ENCODE measurements at regions of chr5 and their contacts with region 1.

Region 1: GRCh38 chr5:129767906-129768380 is 20.0 kb downstream of the MINAR2 start:
- DNase-seq: peak; percentile 84
- H3K4me3 ChIP-seq: no peak overlapping the region
- H3K27ac ChIP-seq: no peak overlapping the region
- H3K4me1 ChIP-seq: no peaks in the 10 kb centered on the region
- H3K27me3 ChIP-seq: no peaks in the 10 kb centered on the region
- CTCF ChIP-seq: peak; percentile 96 to 99

Region 2: GRCh38 chr5:128213340-128213739 is 1554.6 kb before region 1 on chr5:
- CTCF ChIA-PET with region 1: no interaction called
- dilution Hi-C with region 1: no loop called
- in situ Hi-C with region 1: no loop called
- intact Hi-C with region 1: loop called (anchors 5 kb)
- DNase-seq: peak; percentile 46
- H3K4me3 ChIP-seq: no peak overlapping the region
- H3K27ac ChIP-seq: no peak overlapping the region
- H3K4me1 ChIP-seq: peaks cover 8% of the 10 kb centered on the region
- H3K27me3 ChIP-seq: no peaks in the 10 kb centered on the region
- CTCF ChIP-seq: peak; percentile 74 to 78

Region 3: DNA sequence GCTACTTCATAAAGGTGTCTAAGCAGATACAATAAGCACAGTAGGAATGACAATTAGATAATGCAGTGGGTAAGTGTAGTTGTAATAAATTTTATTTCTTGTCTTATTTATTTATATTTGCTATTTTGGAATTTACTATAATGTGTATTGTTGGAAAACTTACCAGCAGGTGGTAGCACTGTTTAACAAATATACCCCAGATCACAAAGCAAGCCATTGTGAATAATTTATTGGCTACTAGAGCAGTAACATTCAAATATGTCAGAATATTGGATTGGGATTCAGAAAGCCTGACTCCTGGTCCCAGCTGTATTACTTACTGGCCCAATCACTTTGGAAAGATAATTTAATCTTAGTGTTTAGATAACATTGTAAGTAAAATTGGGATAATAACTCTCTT is 595.4 kb before region 1 on chr5:
- CTCF ChIA-PET with region 1: no interaction called
- dilution Hi-C with region 1: no loop called
- in situ Hi-C with region 1: loop called in 1 of 2 experiments (anchors 25 kb)
- intact Hi-C with region 1: loop called (anchors 1 kb)
- DNase-seq: no peak
- H3K4me3 ChIP-seq: no peak overlapping the region
- H3K27ac ChIP-seq: no peak overlapping the region
- H3K4me1 ChIP-seq: no peaks in the 10 kb centered on the region
- H3K27me3 ChIP-seq: no peaks in the 10 kb centered on the region
- CTCF ChIP-seq: peak in 1 of 2 donors; percentile 21

Region 4: GRCh38 chr5:129400322-129400983 is 367.5 kb before region 1 on chr5:
- CTCF ChIA-PET with region 1: no interaction called
- dilution Hi-C with region 1: no loop called
- in situ Hi-C with region 1: no loop called
- intact Hi-C with region 1: loop called (anchors 1 kb)
- DNase-seq: no peak
- H3K4me3 ChIP-seq: no peak overlapping the region
- H3K27ac ChIP-seq: no peak overlapping the region
- H3K4me1 ChIP-seq: no peaks in the 10 kb centered on the region
- H3K27me3 ChIP-seq: peaks cover 1% of the 10 kb centered on the region
- CTCF ChIP-seq: peak; percentile 10 to 27

Region 5: GRCh38 chr5:129664337-129664937 is 103.5 kb before region 1 on chr5:
- CTCF ChIA-PET with region 1: interaction called, 3 read pairs
- dilution Hi-C with region 1: no loop called
- in situ Hi-C with region 1: no loop called
- intact Hi-C with region 1: loop called (anchors 1 kb)
- DNase-seq: peak; percentile 20
- H3K4me3 ChIP-seq: no peak overlapping the region
- H3K27ac ChIP-seq: no peak overlapping the region
- H3K4me1 ChIP-seq: no peaks in the 10 kb centered on the region
- H3K27me3 ChIP-seq: no peaks in the 10 kb centered on the region
- CTCF ChIP-seq: peak; percentile 85 to 97

Region 6: GRCh38 chr5:129836321-129836720 is 68.4 kb after region 1 on chr5:
- CTCF ChIA-PET with region 1: no interaction called
- dilution Hi-C with region 1: no loop called
- in situ Hi-C with region 1: no loop called
- intact Hi-C with region 1: no loop called
- DNase-seq: no peak
- H3K4me3 ChIP-seq: no peak overlapping the region
- H3K27ac ChIP-seq: no peak overlapping the region
- H3K4me1 ChIP-seq: no peaks in the 10 kb centered on the region
- H3K27me3 ChIP-seq: no peaks in the 10 kb centered on the region
- CTCF ChIP-seq: no peak

Region 7: GRCh38 chr5:130912088-130912487 is 1144.1 kb after region 1 on chr5:
- CTCF ChIA-PET with region 1: no interaction called
- dilution Hi-C with region 1: no loop called
- in situ Hi-C with region 1: no loop called
- intact Hi-C with region 1: loop called (anchors 5 kb)
- DNase-seq: peak; percentile 6
- H3K4me3 ChIP-seq: no peak overlapping the region
- H3K27ac ChIP-seq: no peak overlapping the region
- H3K4me1 ChIP-seq: no peaks in the 10 kb centered on the region
- H3K27me3 ChIP-seq: peaks cover 2% of the 10 kb centered on the region
- CTCF ChIP-seq: peak; percentile 36 to 55

Measured in mammary epithelial cell (primary cell).